Natural killer cell (primary cell): ENCODE measurements at regions of chr12 and their contacts with region 1.

Region 1: DNA sequence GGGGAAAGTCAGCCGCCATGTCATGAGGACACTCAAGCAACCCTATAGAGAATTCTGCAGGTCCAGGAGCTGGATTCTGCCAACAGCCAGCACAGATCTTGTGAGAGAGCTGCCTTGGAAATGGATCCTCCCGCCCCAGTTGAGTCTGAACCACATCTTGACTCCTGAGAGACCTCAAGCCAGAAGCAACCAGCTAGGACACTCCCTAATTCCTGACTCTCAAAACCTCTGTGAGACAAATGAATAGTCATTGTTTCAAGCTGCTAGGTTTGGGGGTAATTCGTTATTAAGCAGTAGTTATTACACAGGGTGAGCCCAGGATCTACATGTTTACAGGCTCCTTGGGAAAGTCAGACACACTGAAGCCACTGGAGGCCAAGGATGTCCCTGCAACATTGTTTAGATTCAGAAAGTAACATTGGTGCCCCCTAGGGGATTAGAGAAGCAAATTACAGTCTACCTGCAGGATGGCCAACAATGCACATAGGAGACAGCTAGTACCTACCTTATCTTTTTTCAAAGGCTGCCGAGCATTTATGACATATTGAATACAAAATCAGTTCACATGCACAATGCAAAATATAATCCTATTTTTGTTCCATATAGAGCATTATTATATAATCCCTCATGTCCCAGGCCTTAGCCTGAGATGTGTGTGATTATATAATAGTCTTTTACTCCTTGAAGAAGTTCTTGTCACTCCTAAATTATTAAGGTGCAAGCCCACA is 57.9 kb upstream of the FICD start:
- DNase-seq: peak in 1 of 2 donors; percentile 48
- ATAC-seq: peak; percentile 68 to 90 (median 69)
- H3K4me3 ChIP-seq: no peak overlapping the region
- H3K4me3 Mint-ChIP-seq: no peak overlapping the region
- H3K27ac ChIP-seq: no peak overlapping the region
- H3K27ac Mint-ChIP-seq: no peak overlapping the region
- H3K4me1 ChIP-seq: no peaks in the 10 kb centered on the region
- H3K4me1 Mint-ChIP-seq: peaks cover 18 to 19% of the 10 kb centered on the region in 2 donors
- H3K27me3 ChIP-seq: peaks cover 2% of the 10 kb centered on the region
- H3K27me3 Mint-ChIP-seq: peaks cover 18 to 38% of the 10 kb centered on the region in 2 donors
- CTCF ChIP-seq: peak; percentile 89

Region 2: DNA sequence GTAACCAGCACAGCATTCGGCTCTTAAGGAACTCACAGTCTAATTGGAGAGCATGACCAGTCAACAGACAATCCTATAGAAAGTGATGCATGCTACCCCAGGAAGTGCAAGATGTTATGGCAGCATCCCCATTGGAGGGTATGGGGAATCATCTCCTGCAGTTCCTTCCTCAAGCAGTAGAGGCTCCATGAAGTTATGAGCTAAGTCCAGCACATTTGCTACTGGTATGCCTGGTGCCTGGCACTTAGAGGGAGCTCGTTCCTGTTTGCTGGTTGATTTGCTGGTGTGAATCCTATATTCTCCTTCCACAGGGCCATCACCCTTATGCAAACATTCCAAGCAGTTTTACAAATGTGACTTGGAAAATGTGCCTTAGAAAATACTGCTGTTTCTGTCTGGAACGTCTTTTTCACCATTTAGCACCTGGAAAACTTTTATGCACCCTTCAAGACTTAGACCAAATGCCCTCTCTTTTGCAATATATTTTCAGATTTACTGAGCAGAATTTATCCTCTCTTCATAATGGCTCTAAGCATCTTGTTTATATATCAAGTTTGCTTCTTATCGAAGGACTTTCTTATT is 464.2 kb before region 1 on chr12:
- intact Hi-C with region 1: loop called (anchors 2 kb)
- DNase-seq: peak in 1 of 2 donors; percentile 12
- ATAC-seq: peak in 2 of 3 donors; percentile 32 to 65
- H3K4me3 ChIP-seq: no peak overlapping the region
- H3K4me3 Mint-ChIP-seq: no peak overlapping the region
- H3K27ac ChIP-seq: no peak overlapping the region
- H3K27ac Mint-ChIP-seq: no peak overlapping the region
- H3K4me1 ChIP-seq: no peaks in the 10 kb centered on the region
- H3K4me1 Mint-ChIP-seq: no peaks in the 10 kb centered on the region
- H3K27me3 ChIP-seq: peaks cover 3% of the 10 kb centered on the region
- H3K27me3 Mint-ChIP-seq: peaks cover 42 to 56% of the 10 kb centered on the region in 2 donors
- CTCF ChIP-seq: no peak

Region 3: GRCh38 chr12:108099073-108099472 is 358.1 kb before region 1 on chr12:
- intact Hi-C with region 1: loop called (anchors 1 kb)
- DNase-seq: peak in 1 of 2 donors; percentile 17
- ATAC-seq: peak in 2 of 3 donors; percentile 44 to 49
- H3K4me3 ChIP-seq: no peak overlapping the region
- H3K4me3 Mint-ChIP-seq: no peak overlapping the region
- H3K27ac ChIP-seq: no peak overlapping the region
- H3K27ac Mint-ChIP-seq: no peak overlapping the region
- H3K4me1 ChIP-seq: no peaks in the 10 kb centered on the region
- H3K4me1 Mint-ChIP-seq: no peaks in the 10 kb centered on the region
- H3K27me3 ChIP-seq: no peaks in the 10 kb centered on the region
- H3K27me3 Mint-ChIP-seq: peaks cover 10 to 12% of the 10 kb centered on the region in 2 donors
- CTCF ChIP-seq: peak; percentile 39

Region 4: GRCh38 chr12:108175310-108175709 is 281.9 kb before region 1 on chr12:
- intact Hi-C with region 1: loop called (anchors 1 kb)
- DNase-seq: no peak
- ATAC-seq: no peak
- H3K4me3 ChIP-seq: no peak overlapping the region
- H3K4me3 Mint-ChIP-seq: no peak overlapping the region
- H3K27ac ChIP-seq: no peak overlapping the region
- H3K27ac Mint-ChIP-seq: no peak overlapping the region
- H3K4me1 ChIP-seq: peaks cover 1% of the 10 kb centered on the region
- H3K4me1 Mint-ChIP-seq: peaks cover 2 to 3% of the 10 kb centered on the region in 2 donors
- H3K27me3 ChIP-seq: no peaks in the 10 kb centered on the region
- H3K27me3 Mint-ChIP-seq: peaks cover 1 to 4% of the 10 kb centered on the region in 2 donors
- CTCF ChIP-seq: no peak

Region 5: DNA sequence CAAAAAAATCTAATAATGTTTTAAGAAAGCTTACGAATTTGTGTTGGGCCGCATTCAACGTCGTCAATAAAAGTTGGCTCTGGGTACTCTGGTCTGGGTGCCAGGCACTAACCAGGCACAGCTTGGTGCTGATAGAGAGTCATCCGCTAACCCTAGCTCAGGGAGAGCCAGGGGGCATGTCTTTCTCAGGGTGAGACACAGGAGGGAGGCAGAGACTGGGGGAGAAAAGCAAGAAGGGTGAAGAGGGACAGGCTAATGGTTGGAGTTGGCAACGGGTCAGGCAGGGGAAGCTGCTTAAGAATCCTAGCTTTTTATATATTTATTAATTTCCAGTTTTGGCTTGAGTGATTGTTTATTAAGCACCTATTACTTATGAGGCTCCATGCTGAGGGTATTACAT is 223.0 kb before region 1 on chr12:
- intact Hi-C with region 1: loop called (anchors 1 kb)
- DNase-seq: peak; percentile 20 to 22
- ATAC-seq: peak; percentile 66 to 94 (median 88)
- H3K4me3 ChIP-seq: no peak overlapping the region
- H3K4me3 Mint-ChIP-seq: no peak overlapping the region
- H3K27ac ChIP-seq: no peak overlapping the region
- H3K27ac Mint-ChIP-seq: no peak overlapping the region
- H3K4me1 ChIP-seq: peaks cover 1% of the 10 kb centered on the region
- H3K4me1 Mint-ChIP-seq: peaks cover 7 to 11% of the 10 kb centered on the region in 2 donors
- H3K27me3 ChIP-seq: no peaks in the 10 kb centered on the region
- H3K27me3 Mint-ChIP-seq: peaks cover 10% of the 10 kb centered on the region in 2 donors
- CTCF ChIP-seq: peak; percentile 56

Region 6: GRCh38 chr12:108337235-108338223 is 119.6 kb before region 1 on chr12:
- intact Hi-C with region 1: loop called (anchors 10 kb)
- DNase-seq: peak; percentile 17 to 36
- ATAC-seq: peak; percentile 40 to 57 (median 53)
- H3K4me3 ChIP-seq: peak overlapping the region; percentile 60
- H3K4me3 Mint-ChIP-seq: peak overlapping the region; percentile 91
- H3K27ac ChIP-seq: peak overlapping the region; percentile 71
- H3K27ac Mint-ChIP-seq: peak overlapping the region; percentile 94 to 96
- H3K4me1 ChIP-seq: peaks cover 66% of the 10 kb centered on the region
- H3K4me1 Mint-ChIP-seq: peaks cover 62 to 82% of the 10 kb centered on the region in 2 donors
- H3K27me3 ChIP-seq: no peaks in the 10 kb centered on the region
- H3K27me3 Mint-ChIP-seq: no peaks in the 10 kb centered on the region
- CTCF ChIP-seq: peak; percentile 69

Region 7: GRCh38 chr12:108514973-108515814 is 58.0 kb after region 1 on chr12 and contains the start of gene FICD:
- intact Hi-C with region 1: loop called (anchors 1 kb)
- DNase-seq: peak; percentile 96 to 99
- ATAC-seq: peak; percentile 94 to 97 (median 94)
- H3K4me3 ChIP-seq: peak within 1 kb of the TSS; percentile 75
- H3K4me3 Mint-ChIP-seq: peak within 1 kb of the TSS; percentile 93
- H3K27ac ChIP-seq: peak within 1 kb of the TSS; percentile 69
- H3K27ac Mint-ChIP-seq: peak within 1 kb of the TSS; percentile 85 to 95
- H3K4me1 ChIP-seq: peaks cover 29% of the 10 kb centered on the region
- H3K4me1 Mint-ChIP-seq: peaks cover 40 to 42% of the 10 kb centered on the region in 2 donors
- H3K27me3 ChIP-seq: no peaks in the 10 kb centered on the region
- H3K27me3 Mint-ChIP-seq: no peaks in the 10 kb centered on the region
- CTCF ChIP-seq: no peak
- total RNA-seq, gene FICD: 3.9 to 7.5 (median 6.6) TPM